ENCODE measurements at regions of chr11 and their contacts with region 1.

Region 1: DNA sequence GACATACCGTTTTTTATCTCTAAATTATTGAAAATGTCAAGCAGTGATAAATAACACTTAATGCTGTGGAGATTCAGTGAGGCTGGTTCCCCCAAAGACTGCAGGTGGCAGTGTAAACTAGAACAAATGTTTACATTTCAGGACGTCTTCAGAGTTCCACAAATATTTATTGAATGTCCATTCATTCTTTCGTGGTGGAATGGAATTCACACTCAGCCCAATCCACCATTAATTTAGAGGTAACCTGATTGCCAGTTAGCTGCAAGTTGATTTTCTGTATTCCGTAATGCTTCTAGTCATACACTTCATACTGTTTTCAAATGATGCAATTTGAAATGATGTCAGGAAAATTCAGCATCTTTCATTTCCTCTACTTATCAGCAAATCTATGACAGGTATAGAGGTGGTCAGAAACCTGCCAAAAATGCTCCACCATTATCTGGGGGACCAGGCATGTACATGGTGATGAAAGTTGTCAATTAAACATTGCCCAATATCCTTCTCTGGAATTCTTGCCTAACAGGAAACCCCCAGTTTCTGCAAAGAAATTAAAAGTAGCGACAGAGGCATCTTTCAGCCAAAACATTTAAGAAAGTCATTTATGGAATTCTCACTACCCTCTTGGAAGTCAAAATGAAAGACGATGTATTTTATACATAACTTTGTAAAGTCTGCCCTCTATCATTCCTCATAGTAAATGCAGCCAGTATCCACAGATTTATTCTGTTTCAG is 94.3 kb upstream of the BMAL1 start:
- DNase-seq: peak; percentile 22 to 66
- H3K4me3 ChIP-seq: peak overlapping the region; percentile 39; the same call in 1 of the 2 replicates
- H3K27ac ChIP-seq: peak overlapping the region; percentile 42
- H3K4me1 ChIP-seq: peaks cover 12% of the 10 kb centered on the region; the same call in 1 of the 2 replicates
- H3K27me3 ChIP-seq: no peaks in the 10 kb centered on the region
- CTCF ChIP-seq: peak; percentile 56

Region 2: GRCh38 chr11:12224537-12224893 is 958.7 kb before region 1 on chr11:
- CTCF ChIA-PET with region 1: no interaction called
- POLR2A ChIA-PET with region 1: no interaction called
- intact Hi-C with region 1: no loop called
- DNase-seq: peak; percentile 78 to 79
- H3K4me3 ChIP-seq: peak overlapping the region; percentile 41; the same call in 1 of the 2 replicates
- H3K27ac ChIP-seq: peak overlapping the region; percentile 94
- H3K4me1 ChIP-seq: peaks cover 70% of the 10 kb centered on the region
- H3K27me3 ChIP-seq: no peaks in the 10 kb centered on the region
- CTCF ChIP-seq: no peak

Region 3: GRCh38 chr11:12485328-12485727 is 697.9 kb before region 1 on chr11:
- CTCF ChIA-PET with region 1: no interaction called
- POLR2A ChIA-PET with region 1: no interaction called
- intact Hi-C with region 1: no loop called
- DNase-seq: no peak
- H3K4me3 ChIP-seq: no peak overlapping the region
- H3K27ac ChIP-seq: no peak overlapping the region
- H3K4me1 ChIP-seq: no peaks in the 10 kb centered on the region
- H3K27me3 ChIP-seq: no peaks in the 10 kb centered on the region
- CTCF ChIP-seq: peak; percentile 58; the same call in 1 of the 2 replicates

Region 4: DNA sequence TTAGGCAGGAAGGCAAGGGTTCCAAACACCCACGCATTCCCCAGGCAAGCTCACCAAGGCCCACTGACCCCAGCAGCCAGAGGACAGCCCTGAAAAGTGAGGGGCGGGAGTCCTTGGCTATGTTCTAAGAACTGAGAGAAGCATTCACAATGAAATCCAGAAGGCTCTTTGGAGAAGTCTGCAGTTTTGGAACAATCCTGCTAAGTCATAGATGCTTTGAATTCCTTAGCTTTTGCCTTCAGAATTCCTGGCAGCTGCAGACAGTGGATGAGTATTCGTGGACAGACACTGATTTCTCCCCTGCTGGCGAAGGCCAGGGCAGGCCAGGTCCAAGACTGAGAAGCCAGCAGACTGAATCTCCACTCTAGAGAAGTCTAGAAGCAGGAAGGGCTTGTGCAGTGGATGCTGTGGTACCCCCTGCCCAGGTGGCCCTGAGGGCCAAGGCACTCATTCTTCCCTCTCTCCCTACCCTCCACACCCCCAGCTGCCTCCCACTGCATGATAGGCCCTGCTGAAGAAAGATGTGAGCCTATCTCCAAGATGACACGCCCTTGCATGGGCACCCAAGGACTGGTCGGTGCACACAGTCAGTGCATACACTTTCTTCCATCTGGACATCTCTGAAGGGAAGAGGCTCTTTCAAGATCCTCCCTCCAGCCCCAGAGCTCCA is 642.2 kb before region 1 on chr11:
- CTCF ChIA-PET with region 1: no interaction called
- POLR2A ChIA-PET with region 1: no interaction called
- intact Hi-C with region 1: no loop called
- DNase-seq: peak in 1 of 2 experiments; percentile 15
- H3K4me3 ChIP-seq: no peak overlapping the region
- H3K27ac ChIP-seq: no peak overlapping the region
- H3K4me1 ChIP-seq: peaks cover 16% of the 10 kb centered on the region
- H3K27me3 ChIP-seq: no peaks in the 10 kb centered on the region
- CTCF ChIP-seq: no peak

Region 5: GRCh38 chr11:13384908-13385640 is 201.8 kb after region 1 on chr11:
- CTCF ChIA-PET with region 1: interaction called, 3 read pairs
- POLR2A ChIA-PET with region 1: no interaction called
- intact Hi-C with region 1: loop called (anchors 1 kb)
- DNase-seq: peak in 1 of 2 experiments; percentile 6
- H3K4me3 ChIP-seq: no peak overlapping the region
- H3K27ac ChIP-seq: no peak overlapping the region
- H3K4me1 ChIP-seq: no peaks in the 10 kb centered on the region
- H3K27me3 ChIP-seq: no peaks in the 10 kb centered on the region
- CTCF ChIP-seq: peak; percentile 68